IMR-90 (cell line): ENCODE measurements at regions of chr19 and their contacts with region 1.

Region 1: GRCh38 chr19:36665832-36666231 is 805 bp downstream of the ZNF461 start:
- DNase-seq: no peak
- ATAC-seq: no peak
- H3K4me3 ChIP-seq: peak overlapping the region; percentile 67
- H3K27ac ChIP-seq: no peak overlapping the region
- H3K4me1 ChIP-seq: peaks cover 2% of the 10 kb centered on the region; the same call in 1 of the 2 replicates
- H3K27me3 ChIP-seq: no peaks in the 10 kb centered on the region
- CTCF ChIP-seq: no peak
- POLR2A ChIP-seq: no peak
- RAD21 ChIP-seq: no peak

Region 2: DNA sequence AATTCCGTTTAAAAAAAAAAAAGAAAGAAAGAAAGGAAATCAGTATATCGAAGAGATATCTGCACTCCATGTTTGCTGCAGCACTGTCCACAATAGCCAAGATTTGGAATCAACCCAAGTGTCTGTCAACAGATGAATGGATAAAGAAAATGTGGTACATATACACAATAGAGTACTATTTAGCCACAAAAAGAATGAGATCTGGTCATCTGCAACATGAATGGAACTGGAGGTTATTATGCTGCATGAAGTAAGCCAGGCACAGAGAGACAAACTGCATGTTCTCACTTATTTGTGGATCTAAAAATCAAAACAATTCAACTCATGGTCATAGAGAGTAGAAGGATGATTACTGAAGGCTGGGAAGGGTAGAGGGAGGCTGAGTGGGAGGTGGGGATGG is 467.7 kb before region 1 on chr19:
- CTCF ChIA-PET with region 1: no interaction called
- POLR2A ChIA-PET with region 1: no interaction called
- dilution Hi-C with region 1: no loop called
- in situ Hi-C with region 1: no loop called
- intact Hi-C with region 1: loop called (anchors 5 kb)
- DNase-seq: no peak
- ATAC-seq: no peak
- H3K4me3 ChIP-seq: no peak overlapping the region
- H3K27ac ChIP-seq: no peak overlapping the region
- H3K4me1 ChIP-seq: no peaks in the 10 kb centered on the region
- H3K27me3 ChIP-seq: no peaks in the 10 kb centered on the region
- CTCF ChIP-seq: no peak
- POLR2A ChIP-seq: no peak
- RAD21 ChIP-seq: no peak

Region 3: GRCh38 chr19:36573020-36573885 is 92.6 kb before region 1 on chr19 and contains the start of gene ZNF529:
- CTCF ChIA-PET with region 1: no interaction called
- POLR2A ChIA-PET with region 1: no interaction called
- dilution Hi-C with region 1: no loop called
- in situ Hi-C with region 1: no loop called
- intact Hi-C with region 1: loop called (anchors 2 kb)
- DNase-seq: peak; percentile 86
- ATAC-seq: peak; percentile 96
- H3K4me3 ChIP-seq: peak within 1 kb of the TSS; percentile 58
- H3K27ac ChIP-seq: peak within 1 kb of the TSS; percentile 87
- H3K4me1 ChIP-seq: peaks cover 2% of the 10 kb centered on the region; the same call in 1 of the 2 replicates
- H3K27me3 ChIP-seq: no peaks in the 10 kb centered on the region
- CTCF ChIP-seq: no peak
- POLR2A ChIP-seq: peak; percentile 88
- RAD21 ChIP-seq: no peak
- total RNA-seq, gene ZNF529: 6.8 and 8.6 TPM in 2 replicates

Region 4: DNA sequence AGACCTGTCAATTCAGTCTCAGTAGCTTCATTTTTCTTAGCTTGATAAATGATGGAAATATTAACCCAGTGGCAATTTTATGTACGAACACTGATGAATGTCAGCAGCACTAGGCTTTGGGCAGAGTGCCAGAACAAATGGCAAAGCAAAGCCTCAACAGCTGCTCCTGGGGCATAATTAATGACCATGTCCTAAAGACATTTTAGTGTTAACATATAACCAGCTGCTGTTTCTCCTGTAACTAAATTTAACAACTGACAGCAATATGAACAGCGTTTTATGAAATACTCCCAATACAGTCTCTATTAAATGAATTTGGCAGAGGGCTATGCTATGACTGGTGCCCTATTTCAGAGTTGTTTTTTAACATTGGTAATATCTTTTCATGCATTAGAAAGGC is 297.4 kb after region 1 on chr19:
- CTCF ChIA-PET with region 1: no interaction called
- POLR2A ChIA-PET with region 1: no interaction called
- dilution Hi-C with region 1: no loop called
- in situ Hi-C with region 1: no loop called
- intact Hi-C with region 1: no loop called
- DNase-seq: no peak
- ATAC-seq: no peak
- H3K4me3 ChIP-seq: no peak overlapping the region
- H3K27ac ChIP-seq: no peak overlapping the region
- H3K4me1 ChIP-seq: no peaks in the 10 kb centered on the region
- H3K27me3 ChIP-seq: no peaks in the 10 kb centered on the region
- CTCF ChIP-seq: no peak
- POLR2A ChIP-seq: no peak
- RAD21 ChIP-seq: no peak